Activated CD8-positive, alpha-beta T cell treated with anti-CD3 and anti-CD28 coated beads, Interleukin-2, amount 10 ng/mL, durations not matched to agents 7 days and 5 days (primary cell): ENCODE measurements at regions of chr4 and their contacts with region 1.

Region 1: DNA sequence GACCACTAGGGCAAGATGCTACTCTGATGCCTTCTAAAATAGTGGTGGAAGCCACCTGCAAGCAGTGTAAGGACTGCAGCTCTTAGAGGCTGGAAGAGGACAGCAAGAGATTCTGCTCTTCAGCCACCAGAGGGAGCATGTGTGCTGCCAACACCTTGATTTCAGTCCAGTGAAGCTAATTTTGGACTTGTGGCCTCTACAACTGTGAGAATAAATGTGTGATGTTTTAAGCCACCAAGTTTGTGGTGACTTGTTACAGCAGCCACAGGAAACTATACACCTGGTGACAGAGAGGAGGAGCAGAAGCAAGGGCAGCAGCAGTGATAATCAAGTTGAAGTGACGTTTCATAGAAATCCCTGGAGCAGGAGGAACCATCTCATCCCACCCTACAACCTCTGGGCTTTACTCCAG is 55.9 kb downstream of the FGFBP1 start:
- DNase-seq: peak; percentile 67
- ATAC-seq: peak; percentile 79
- H3K4me3 Mint-ChIP-seq: no peak overlapping the region
- H3K27ac Mint-ChIP-seq: no peak overlapping the region
- H3K4me1 Mint-ChIP-seq: peaks cover 3% of the 10 kb centered on the region
- H3K27me3 Mint-ChIP-seq: peaks cover 11% of the 10 kb centered on the region

Region 2: DNA sequence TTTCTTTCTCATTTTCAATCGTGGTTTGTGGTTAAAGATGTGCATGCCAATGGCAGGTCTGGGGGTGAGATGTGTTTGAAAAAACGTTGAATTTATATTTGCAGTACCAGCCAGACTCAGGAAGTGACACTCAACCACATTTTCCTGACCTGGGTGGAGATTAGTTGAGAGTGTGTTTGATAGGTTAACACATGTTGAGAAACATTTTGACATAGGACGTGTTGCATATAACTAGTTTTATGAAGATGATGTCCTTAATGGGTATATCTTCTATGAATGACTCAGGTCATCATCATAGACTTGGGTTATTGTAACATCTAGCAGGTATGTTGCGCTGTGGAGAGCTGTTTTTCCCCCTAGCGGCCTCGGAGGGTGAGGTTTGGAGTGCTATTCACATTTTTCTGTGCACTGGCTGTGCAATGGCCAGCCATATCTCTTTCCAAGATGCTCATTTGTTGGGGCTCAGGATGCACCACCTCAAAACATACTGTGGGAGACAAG is 126.3 kb before region 1 on chr4:
- CTCF ChIA-PET with region 1: interaction called, 11 read pairs
- POLR2A ChIA-PET with region 1: no interaction called
- DNase-seq: peak; percentile 90
- ATAC-seq: peak; percentile 84
- H3K4me3 Mint-ChIP-seq: peak overlapping the region; percentile 74
- H3K27ac Mint-ChIP-seq: peak overlapping the region; percentile 90
- H3K4me1 Mint-ChIP-seq: peaks cover 67% of the 10 kb centered on the region
- H3K27me3 Mint-ChIP-seq: no peaks in the 10 kb centered on the region

Region 3: GRCh38 chr4:15868111-15868510 is 14.6 kb before region 1 on chr4:
- CTCF ChIA-PET with region 1: interaction called, 12 read pairs
- POLR2A ChIA-PET with region 1: no interaction called
- DNase-seq: no peak
- ATAC-seq: no peak
- H3K4me3 Mint-ChIP-seq: no peak overlapping the region
- H3K27ac Mint-ChIP-seq: no peak overlapping the region
- H3K4me1 Mint-ChIP-seq: no peaks in the 10 kb centered on the region
- H3K27me3 Mint-ChIP-seq: no peaks in the 10 kb centered on the region

Region 4: GRCh38 chr4:15926486-15926885 is 43.8 kb after region 1 on chr4:
- CTCF ChIA-PET with region 1: interaction called, 12 read pairs
- POLR2A ChIA-PET with region 1: no interaction called
- DNase-seq: no peak
- ATAC-seq: no peak
- H3K4me3 Mint-ChIP-seq: no peak overlapping the region
- H3K27ac Mint-ChIP-seq: no peak overlapping the region
- H3K4me1 Mint-ChIP-seq: no peaks in the 10 kb centered on the region
- H3K27me3 Mint-ChIP-seq: peaks cover 18% of the 10 kb centered on the region

Region 5: DNA sequence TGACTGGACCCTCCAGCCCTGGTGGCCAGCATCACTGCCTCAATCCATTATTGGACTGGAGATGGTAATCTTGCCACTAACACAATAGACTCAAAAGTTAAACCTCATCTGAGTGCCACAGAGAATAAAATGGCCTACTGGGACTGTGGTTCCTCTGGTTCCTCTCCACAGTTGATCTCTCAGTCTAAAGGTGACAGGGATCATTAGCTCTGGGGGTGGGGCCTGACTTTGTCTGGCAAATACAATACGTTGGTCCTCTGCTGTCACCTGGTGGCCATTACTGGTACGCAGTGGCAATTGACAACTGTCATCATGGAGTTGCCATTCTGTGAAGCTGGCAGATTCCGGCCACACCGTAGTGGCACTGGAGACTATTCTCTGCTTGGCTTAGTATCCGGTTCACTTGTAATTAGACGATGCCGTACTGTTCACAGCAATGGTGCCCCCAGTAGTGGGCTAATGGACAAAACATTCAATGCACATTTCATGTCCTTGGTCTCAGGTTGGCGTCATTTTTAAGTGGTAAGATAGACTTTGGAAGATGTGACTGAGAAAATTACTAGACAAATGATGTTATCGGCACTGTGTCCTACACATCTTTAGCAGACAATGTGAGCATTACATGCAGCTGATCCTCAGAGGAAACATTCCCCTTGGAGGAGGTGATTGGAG is 73.6 kb after region 1 on chr4:
- CTCF ChIA-PET with region 1: interaction called, 158 read pairs
- POLR2A ChIA-PET with region 1: no interaction called
- DNase-seq: peak; percentile 90
- ATAC-seq: peak; percentile 91
- H3K4me3 Mint-ChIP-seq: no peak overlapping the region
- H3K27ac Mint-ChIP-seq: no peak overlapping the region
- H3K4me1 Mint-ChIP-seq: peaks cover 11% of the 10 kb centered on the region
- H3K27me3 Mint-ChIP-seq: peaks cover 6% of the 10 kb centered on the region

Region 6: DNA sequence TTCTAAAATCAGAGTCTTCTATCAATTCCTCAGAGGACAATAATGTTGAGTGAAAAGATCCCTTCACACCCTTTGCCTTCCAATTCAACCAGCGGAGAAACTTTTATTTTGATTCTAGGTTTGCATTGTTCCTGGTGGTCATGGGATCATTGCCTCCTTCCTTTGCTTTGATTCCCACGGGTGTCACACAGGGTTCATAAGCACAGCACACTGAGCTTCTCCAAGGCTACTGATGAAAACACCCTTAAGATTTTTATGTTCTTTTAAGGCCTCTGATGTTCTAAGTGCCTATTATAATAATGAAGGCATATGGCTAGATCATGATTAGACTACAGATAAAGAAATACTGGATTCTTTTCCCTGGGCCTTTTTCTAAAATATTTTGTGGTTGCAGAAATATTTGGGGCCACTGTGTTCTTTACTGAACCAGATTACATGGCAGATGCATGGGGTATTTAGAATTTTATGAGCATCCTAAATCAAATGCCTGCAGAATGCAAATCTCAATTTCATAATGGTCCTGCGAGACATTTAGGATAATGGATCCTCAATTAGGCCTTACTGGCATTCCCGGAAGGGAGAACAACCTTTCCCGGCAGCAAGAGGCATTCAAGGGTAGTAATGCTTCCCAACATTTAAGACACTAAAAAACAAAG is 124.2 kb after region 1 on chr4:
- CTCF ChIA-PET with region 1: interaction called, 98 read pairs
- POLR2A ChIA-PET with region 1: no interaction called
- DNase-seq: no peak
- ATAC-seq: no peak
- H3K4me3 Mint-ChIP-seq: no peak overlapping the region
- H3K27ac Mint-ChIP-seq: no peak overlapping the region
- H3K4me1 Mint-ChIP-seq: no peaks in the 10 kb centered on the region
- H3K27me3 Mint-ChIP-seq: peaks cover 17% of the 10 kb centered on the region